AG04450 (cell line): ENCODE measurements at regions of chr2 and their contacts with region 1.

Region 1: GRCh38 chr2:187581125-187581896 is 27.1 kb upstream of the TFPI start:
- DNase-seq: no peak
- H3K4me3 ChIP-seq: no peak overlapping the region; the same call in 1 of the 2 replicates
- H3K27ac ChIP-seq: no peak overlapping the region
- H3K27me3 ChIP-seq: no peaks in the 10 kb centered on the region
- CTCF ChIP-seq: peak; percentile 70

Region 2: GRCh38 chr2:187349326-187349944 is 231.9 kb before region 1 on chr2:
- CTCF ChIA-PET with region 1: no interaction called
- POLR2A ChIA-PET with region 1: no interaction called
- DNase-seq: no peak
- H3K4me3 ChIP-seq: no peak overlapping the region
- H3K27ac ChIP-seq: no peak overlapping the region
- H3K27me3 ChIP-seq: no peaks in the 10 kb centered on the region
- CTCF ChIP-seq: no peak

Region 3: DNA sequence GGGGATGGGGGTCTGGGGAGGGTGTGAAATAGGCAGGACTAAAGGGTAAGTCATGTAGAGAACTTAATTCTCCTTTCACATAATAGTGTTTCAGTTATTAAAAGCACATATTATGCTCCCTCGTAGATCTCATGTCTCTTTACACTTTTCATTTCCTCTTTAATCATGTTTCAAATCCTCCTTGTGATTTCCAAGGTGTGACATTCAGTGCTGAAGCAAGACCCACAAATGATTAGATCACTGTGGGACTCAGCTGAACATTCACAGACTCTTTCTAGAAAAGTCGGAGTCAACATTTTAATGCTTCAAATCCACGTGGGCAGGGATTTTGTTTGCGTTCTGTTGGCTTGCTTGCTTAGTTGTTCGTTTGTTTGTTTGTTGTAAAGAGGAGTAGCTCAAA is 98.5 kb before region 1 on chr2:
- CTCF ChIA-PET with region 1: interaction called, 13 read pairs
- POLR2A ChIA-PET with region 1: no interaction called
- DNase-seq: no peak
- H3K4me3 ChIP-seq: no peak overlapping the region
- H3K27ac ChIP-seq: no peak overlapping the region
- H3K27me3 ChIP-seq: no peaks in the 10 kb centered on the region
- CTCF ChIP-seq: no peak

Region 4: GRCh38 chr2:187509667-187510417 is 71.5 kb before region 1 on chr2:
- CTCF ChIA-PET with region 1: interaction called, 792 read pairs
- POLR2A ChIA-PET with region 1: no interaction called
- DNase-seq: no peak
- H3K4me3 ChIP-seq: no peak overlapping the region
- H3K27ac ChIP-seq: no peak overlapping the region
- H3K27me3 ChIP-seq: no peaks in the 10 kb centered on the region
- CTCF ChIP-seq: no peak

Region 5: DNA sequence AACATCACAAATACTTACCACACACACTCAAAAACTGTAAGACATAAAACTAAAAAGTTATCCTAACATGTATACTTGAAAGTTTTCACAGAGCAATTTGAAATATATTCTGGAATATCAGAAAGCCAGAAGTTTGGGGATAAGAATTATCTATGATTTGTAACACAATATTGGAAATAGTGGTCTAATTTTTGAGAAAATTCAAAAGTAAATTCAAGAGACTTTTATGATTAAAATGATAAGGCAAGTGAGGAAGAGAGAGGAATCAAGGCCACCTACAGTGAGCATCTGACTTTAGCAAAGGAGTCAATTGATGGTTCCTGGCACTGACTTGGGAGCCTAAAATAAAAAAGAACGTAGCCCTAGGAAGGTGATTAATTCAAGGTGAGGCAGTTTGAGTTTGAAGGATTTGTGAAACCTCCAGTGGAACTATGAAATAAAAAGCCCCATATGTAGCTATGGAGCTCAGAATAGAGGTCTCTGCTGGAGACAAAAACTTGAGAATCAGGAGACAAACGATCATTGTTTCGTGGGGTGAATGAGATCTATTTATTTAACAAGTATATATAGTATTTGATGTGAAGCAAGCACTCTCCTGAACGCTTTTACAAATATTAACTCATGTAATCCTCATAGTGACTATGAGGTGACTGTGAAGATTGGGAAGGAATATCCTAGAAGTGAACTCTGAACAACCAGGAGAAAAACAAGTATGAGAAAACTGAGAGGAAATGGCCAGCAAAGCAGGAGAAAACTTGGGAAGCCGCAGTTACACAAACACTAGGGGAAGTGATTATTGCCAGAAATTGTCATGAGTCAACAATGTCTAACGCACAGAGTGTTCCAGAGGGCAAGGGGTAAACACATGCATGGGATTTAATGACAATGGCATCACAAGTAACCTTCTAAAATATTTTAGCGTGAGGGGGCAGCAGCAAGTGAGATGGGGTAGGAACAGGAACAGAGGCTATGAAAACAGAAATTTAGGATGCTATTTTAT is 39.9 kb before region 1 on chr2:
- CTCF ChIA-PET with region 1: interaction called, 68 read pairs
- POLR2A ChIA-PET with region 1: no interaction called
- DNase-seq: peak; percentile 49
- H3K4me3 ChIP-seq: no peak overlapping the region
- H3K27ac ChIP-seq: peak overlapping the region; percentile 49
- H3K27me3 ChIP-seq: no peaks in the 10 kb centered on the region
- CTCF ChIP-seq: no peak

Region 6: GRCh38 chr2:187554011-187554703 is 27.2 kb before region 1 on chr2 and contains the start of gene TFPI:
- CTCF ChIA-PET with region 1: interaction called, 68 read pairs
- POLR2A ChIA-PET with region 1: no interaction called
- DNase-seq: no peak
- H3K4me3 ChIP-seq: peak within 1 kb of the TSS; percentile 75
- H3K27ac ChIP-seq: peak within 1 kb of the TSS; percentile 58
- H3K27me3 ChIP-seq: no peaks in the 10 kb centered on the region
- CTCF ChIP-seq: no peak
- polyA plus RNA-seq, gene TFPI: 73.2 and 91.2 TPM in 2 replicates

Region 7: GRCh38 chr2:187594801-187595200 is 13.5 kb after region 1 on chr2:
- CTCF ChIA-PET with region 1: interaction called, 52 read pairs
- POLR2A ChIA-PET with region 1: no interaction called
- DNase-seq: no peak
- H3K4me3 ChIP-seq: no peak overlapping the region
- H3K27ac ChIP-seq: no peak overlapping the region
- H3K27me3 ChIP-seq: no peaks in the 10 kb centered on the region
- CTCF ChIP-seq: no peak

Region 8: DNA sequence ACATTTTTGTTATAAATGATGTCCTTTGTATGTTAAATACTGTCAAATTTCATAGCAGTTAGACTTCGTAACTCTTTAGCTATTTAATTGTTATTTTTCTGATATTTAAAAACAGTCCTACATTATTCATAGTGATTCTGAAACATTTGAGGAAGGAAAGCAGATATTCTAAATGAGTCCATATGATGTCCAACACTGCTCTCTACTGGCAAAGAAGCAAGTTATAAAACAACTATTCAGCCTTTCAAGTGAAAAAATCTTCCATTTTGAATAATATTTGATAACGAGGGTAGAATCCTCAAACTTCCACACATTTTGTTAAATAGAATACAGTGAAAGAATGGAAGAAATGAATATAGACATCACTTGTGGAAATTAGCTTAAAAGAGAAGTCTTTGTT is 931.1 kb after region 1 on chr2:
- CTCF ChIA-PET with region 1: interaction called, 14 read pairs
- POLR2A ChIA-PET with region 1: no interaction called
- DNase-seq: peak; percentile 43
- H3K4me3 ChIP-seq: no peak overlapping the region
- H3K27ac ChIP-seq: no peak overlapping the region
- H3K27me3 ChIP-seq: no peaks in the 10 kb centered on the region
- CTCF ChIP-seq: peak; percentile 67